Cardiac septum (tissue), 1 donor: ENCODE measurements at regions of chr1 and their contacts with region 1.

Region 1: GRCh38 chr1:54800899-54801759 is at the start of gene TTC22:
- DNase-seq: peak; percentile 89
- total RNA-seq, gene TTC22: 0.08 TPM

Region 2: DNA sequence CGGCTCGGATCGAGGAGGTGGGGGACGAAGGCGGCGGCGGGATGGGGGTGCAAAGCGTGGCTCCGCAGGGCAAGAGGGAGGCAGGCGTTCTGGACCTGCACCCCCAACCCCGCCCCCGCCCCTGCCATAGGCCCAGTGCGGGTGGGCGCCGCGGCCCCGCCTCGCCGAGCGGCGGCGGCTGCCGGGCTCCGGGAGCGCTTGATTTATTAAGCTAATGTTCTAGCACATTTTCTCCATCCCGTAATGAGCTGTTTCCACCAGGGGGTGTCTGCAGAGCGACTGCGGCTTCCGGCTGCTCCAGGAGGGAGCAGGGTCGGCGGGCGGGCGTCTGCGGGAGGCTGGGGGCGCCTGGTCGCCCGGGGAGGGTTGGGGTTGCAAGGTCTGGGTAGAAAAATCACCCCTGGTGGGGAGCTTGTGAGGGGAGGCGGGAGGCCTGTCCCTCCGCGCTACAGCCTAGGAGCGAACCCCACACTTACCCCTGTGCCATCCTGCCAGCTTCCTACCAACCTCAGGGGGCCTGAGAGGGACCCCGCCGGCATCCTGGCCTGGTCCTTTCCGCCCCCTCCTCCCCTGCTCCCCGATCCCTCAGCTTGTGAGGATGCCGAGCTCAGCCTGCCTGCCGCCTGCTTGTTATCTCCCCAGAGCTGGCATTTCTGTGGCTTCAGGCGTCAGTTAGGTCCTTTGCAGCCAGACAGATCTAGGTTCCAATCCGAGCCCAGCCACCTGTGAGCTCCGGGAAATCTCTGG is 301.6 kb before region 1 on chr1:
- intact Hi-C with region 1: loop called (anchors 10 kb)
- DNase-seq: no peak